ENCODE measurements at regions of chr17 and their contacts with region 1.

Region 1: DNA sequence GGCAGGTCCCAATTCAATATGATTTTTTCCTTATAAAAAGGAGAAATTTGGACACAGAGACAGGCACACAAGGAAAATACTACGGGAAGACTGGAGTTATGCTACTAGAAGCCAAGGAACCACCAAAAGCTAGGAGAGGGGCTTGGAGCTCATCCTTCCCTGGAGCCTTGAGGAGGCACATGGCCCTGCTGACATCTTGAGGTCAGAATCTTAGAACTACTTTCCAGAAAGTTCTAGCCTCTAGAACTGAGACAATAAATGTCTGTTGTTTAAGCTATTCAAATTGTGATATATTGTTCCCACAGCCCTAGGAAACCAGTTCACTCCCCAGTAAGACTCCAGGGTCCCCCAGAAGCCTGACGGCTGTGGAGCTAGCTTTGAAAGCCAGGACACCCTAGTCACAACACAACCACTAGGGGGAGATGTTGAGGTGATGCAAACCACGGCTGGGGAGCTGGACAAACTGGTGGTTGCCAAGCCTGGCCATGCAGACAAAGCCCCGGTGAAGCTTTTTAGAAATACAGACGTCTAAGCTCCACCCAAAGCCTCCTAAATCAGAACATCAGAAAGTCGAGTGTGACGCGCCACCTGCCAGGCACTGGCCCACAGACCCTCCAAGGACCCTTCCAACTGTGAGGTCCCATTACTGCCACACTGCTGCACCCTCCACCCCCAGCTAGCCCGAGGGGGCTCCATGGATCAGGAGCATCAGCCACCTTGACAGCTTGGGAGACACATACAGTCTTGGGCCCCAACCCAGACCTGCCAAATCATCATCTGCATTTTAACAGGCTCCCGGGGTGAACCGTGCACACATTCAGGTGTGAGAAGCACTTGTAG is 106.4 kb downstream of the SLC39A11 start:
- DNase-seq: peak; percentile 76
- H3K4me3 ChIP-seq: no peak overlapping the region
- H3K27ac ChIP-seq: no peak overlapping the region
- H3K4me1 ChIP-seq: no peaks in the 10 kb centered on the region
- H3K27me3 ChIP-seq: no peaks in the 10 kb centered on the region
- CTCF ChIP-seq: peak; percentile 87

Region 2: DNA sequence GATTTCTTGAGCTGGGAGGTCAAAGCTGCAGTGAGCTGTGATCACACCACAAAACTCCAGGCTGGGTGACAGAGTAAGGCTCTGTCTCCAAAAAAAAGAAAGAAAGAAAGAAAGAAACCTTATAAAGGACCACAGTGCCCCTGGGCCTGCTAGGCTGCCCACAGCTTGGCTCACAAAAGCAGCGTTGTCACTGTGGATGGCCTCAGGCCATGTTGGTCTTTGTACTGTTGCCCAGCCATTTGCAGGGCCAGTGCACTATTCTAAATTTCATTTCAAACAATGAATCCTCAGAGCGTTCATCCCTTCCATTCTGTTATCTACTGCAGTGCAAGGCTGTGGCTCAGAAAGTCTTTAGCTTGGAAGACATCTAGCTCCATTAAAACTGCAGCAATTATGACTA is 102.0 kb before region 1 on chr17:
- intact Hi-C with region 1: no loop called
- DNase-seq: no peak
- H3K4me3 ChIP-seq: no peak overlapping the region
- H3K27ac ChIP-seq: no peak overlapping the region
- H3K4me1 ChIP-seq: no peaks in the 10 kb centered on the region
- H3K27me3 ChIP-seq: no peaks in the 10 kb centered on the region
- CTCF ChIP-seq: no peak

Region 3: DNA sequence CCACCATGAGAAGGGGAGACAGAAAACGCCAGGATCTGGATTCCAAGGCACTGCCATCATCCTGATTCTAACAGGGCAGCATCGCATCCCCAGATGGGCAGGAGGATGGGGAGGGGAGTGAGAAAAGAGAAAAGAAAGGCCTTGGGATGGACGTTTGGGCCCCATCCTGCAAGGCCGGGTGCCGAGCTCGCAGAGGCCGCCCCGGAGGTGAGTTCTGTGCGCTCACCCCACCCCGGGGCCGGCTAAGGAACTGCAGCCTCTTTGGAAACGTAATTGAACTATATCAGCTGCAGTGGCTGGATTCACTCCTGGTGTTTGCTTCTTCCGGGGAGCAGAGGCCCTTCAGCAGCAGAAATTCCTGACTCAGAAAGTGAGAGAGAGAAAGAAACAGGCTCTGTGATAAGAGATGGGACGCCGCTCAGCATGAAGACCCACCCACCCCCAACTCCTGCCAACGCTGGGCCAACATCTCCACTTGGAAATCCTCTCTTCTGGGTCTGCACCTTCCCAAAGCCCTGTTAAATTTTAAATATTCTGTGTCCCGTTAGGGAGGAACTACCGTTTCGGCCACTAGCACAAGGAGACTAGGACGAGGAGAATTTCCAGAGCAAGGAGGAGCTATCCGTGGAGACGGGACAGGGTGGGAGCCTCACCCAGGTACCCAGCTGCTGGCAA is 170.2 kb after region 1 on chr17:
- intact Hi-C with region 1: loop called (anchors 5 kb)
- DNase-seq: peak; percentile 70
- H3K4me3 ChIP-seq: no peak overlapping the region
- H3K27ac ChIP-seq: no peak overlapping the region
- H3K4me1 ChIP-seq: no peaks in the 10 kb centered on the region
- H3K27me3 ChIP-seq: no peaks in the 10 kb centered on the region
- CTCF ChIP-seq: peak; percentile 68

Region 4: GRCh38 chr17:73189417-73190099 is 203.5 kb after region 1 on chr17:
- intact Hi-C with region 1: loop called (anchors 10 kb)
- DNase-seq: no peak
- H3K4me3 ChIP-seq: no peak overlapping the region
- H3K27ac ChIP-seq: no peak overlapping the region
- H3K4me1 ChIP-seq: peaks cover 4% of the 10 kb centered on the region
- H3K27me3 ChIP-seq: no peaks in the 10 kb centered on the region
- CTCF ChIP-seq: peak; percentile 53

Region 5: GRCh38 chr17:73371285-73371684 is 385.2 kb after region 1 on chr17:
- intact Hi-C with region 1: loop called (anchors 10 kb)
- DNase-seq: no peak
- H3K4me3 ChIP-seq: no peak overlapping the region
- H3K27ac ChIP-seq: no peak overlapping the region
- H3K4me1 ChIP-seq: no peaks in the 10 kb centered on the region
- H3K27me3 ChIP-seq: no peaks in the 10 kb centered on the region
- CTCF ChIP-seq: no peak

Measured in colonic mucosa (tissue), 4 donors.